Activated T-helper 1 cell treated with anti-CD3 and anti-CD28 coated beads, Interleukin-12 subunit alpha, Interleukin-12 subunit beta, Interleukin-2, Interleukin-4 antibody, amounts not matched to agents 30 ng/mL and 10 ng/mL and 1 ng/mL, durations not matched to agents 14 hours and 24 hours and 36 hours (primary cell): ENCODE measurements at regions of chr11 and their contacts with region 1.

Region 1: DNA sequence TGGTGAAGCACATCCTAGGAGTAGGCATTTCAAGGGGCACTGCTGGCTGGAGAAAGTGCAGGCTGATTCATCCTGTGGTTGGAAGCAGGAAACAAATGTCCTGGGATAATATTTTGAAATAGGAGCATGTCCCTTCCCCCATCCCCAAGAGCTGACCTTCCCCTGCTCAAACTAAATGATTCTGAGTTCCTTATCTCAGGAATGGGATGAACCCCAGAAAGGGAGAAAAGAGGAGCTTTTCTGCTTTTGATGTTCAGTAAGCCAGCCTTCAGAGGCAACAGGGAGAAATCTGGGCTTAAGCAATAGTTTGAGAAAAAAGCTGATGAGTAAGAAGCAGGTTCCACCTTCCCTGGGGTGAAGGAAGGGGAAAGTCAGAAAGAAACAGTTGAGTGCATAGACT is 19.5 kb upstream of the SPON1 start:
- DNase-seq: no peak
- H3K4me3 Mint-ChIP-seq: no peak overlapping the region
- H3K27ac Mint-ChIP-seq: no peak overlapping the region
- H3K4me1 Mint-ChIP-seq: peaks cover 47% of the 10 kb centered on the region
- H3K27me3 Mint-ChIP-seq: peaks cover 5% of the 10 kb centered on the region

Region 2: GRCh38 chr11:13868710-13869397 is 74.1 kb before region 1 on chr11:
- intact Hi-C with region 1: loop called (anchors 5 kb)
- DNase-seq: peak; percentile 25
- H3K4me3 Mint-ChIP-seq: peak overlapping the region; percentile 31
- H3K27ac Mint-ChIP-seq: peak overlapping the region; percentile 71
- H3K4me1 Mint-ChIP-seq: peaks cover 35% of the 10 kb centered on the region
- H3K27me3 Mint-ChIP-seq: peaks cover 12% of the 10 kb centered on the region

Region 3: DNA sequence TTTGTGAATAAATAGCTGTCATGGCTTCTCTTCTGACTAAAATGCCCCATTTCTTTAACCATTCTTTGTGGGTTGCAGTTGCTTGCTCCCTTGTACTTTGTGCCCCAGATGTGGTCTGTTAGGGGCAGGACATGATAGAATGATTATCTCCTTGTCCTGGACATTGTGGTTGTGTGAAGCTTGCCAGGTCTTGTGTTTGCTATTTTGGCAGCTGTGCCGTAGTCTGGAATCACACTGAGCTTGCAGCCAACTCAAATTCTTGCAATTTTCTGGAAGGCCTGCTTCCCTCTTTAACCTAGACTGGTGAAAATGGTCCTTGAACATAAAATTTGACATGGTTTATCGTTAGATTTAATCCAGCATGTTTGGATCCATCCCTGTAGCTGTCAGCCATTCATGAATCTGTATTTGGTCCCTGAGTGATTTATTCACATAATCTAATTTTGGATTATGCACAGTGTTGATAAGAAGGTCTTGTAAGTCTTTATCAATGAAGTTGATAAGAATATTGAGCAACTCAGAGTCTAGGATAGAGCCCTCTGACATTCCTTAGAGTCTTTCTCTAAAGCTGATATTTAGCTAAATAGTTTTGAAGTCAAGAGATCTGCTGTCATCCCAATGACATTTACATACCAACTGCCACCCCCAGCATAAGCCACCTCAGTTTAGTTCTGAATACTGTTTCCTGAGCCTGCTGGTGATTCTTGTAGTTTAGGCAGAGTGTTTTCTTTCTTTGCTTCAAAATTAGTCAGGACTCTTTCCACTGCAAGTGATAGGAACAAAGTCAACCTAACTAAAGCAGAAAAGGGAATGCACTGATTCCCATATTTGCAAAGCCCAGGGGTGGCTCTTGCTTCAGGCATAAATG is 29.3 kb after region 1 on chr11:
- intact Hi-C with region 1: loop called (anchors 2 kb)
- DNase-seq: no peak
- H3K4me3 Mint-ChIP-seq: no peak overlapping the region
- H3K27ac Mint-ChIP-seq: peak overlapping the region; percentile 86
- H3K4me1 Mint-ChIP-seq: peaks cover 36% of the 10 kb centered on the region
- H3K27me3 Mint-ChIP-seq: peaks cover 14% of the 10 kb centered on the region

Region 4: DNA sequence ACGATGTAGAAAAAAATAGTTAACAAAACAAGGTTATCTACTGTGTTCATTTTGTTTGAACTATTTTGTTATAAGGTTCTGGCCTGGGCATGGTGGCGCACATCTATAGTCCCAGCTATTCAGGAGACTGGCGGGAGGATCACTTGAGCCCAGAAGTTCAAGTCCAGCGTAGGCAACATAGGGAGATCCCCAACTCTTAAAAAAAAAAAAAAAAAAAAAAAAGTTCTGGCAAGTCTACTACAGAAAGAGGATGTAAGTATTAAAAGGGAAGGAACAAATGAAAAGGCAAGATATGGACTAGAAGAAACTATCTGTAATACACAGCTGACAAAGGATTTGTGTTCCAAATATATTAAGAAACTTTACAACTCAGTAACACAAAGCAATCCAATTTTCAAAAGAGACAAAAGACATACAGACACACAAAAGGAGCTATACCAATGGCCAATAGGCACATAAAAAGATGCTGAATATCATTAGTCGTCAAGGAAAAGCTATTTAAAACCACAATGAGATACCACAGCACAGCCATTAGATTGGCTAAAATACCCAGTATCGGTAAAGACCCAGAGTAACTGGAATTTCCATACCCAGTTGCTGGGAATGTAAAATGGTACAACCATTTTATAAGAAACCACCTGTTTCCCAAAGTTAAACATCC is 388.6 kb after region 1 on chr11:
- intact Hi-C with region 1: no loop called
- DNase-seq: no peak
- H3K4me3 Mint-ChIP-seq: no peak overlapping the region
- H3K27ac Mint-ChIP-seq: no peak overlapping the region
- H3K4me1 Mint-ChIP-seq: peaks cover 46% of the 10 kb centered on the region
- H3K27me3 Mint-ChIP-seq: no peaks in the 10 kb centered on the region